Lower leg skin (tissue), 4 donors: ENCODE measurements at regions of chr14 and their contacts with region 1.

Region 1: DNA sequence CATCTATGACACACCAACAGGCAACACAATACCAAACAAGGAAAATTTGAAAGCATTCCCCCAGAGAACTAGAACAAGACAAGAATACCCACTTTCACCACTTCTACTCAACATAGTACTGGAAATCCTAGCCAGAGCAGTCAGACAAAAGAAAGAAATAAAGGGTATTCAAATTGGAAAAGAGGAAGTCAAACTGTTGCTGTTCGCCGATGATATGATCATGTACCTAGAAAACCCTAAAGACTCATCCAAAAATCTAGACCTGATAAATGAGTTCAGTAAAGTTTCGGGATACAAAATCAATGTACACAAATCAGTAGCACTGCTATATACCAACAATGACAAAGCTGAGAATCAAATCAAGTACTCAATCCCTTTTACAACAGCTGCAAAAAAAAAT is 8.1 kb upstream of the ATL1 start:
- DNase-seq: no peak
- H3K4me3 ChIP-seq: no peak overlapping the region
- CTCF ChIP-seq: no peak
- POLR2A ChIP-seq: no peak

Region 2: GRCh38 chr14:50610465-50610864 is 58.6 kb after region 1 on chr14:
- intact Hi-C with region 1: loop called (anchors 2 kb)
- DNase-seq: no peak
- H3K4me3 ChIP-seq: no peak overlapping the region
- CTCF ChIP-seq: no peak
- POLR2A ChIP-seq: no peak

Region 3: DNA sequence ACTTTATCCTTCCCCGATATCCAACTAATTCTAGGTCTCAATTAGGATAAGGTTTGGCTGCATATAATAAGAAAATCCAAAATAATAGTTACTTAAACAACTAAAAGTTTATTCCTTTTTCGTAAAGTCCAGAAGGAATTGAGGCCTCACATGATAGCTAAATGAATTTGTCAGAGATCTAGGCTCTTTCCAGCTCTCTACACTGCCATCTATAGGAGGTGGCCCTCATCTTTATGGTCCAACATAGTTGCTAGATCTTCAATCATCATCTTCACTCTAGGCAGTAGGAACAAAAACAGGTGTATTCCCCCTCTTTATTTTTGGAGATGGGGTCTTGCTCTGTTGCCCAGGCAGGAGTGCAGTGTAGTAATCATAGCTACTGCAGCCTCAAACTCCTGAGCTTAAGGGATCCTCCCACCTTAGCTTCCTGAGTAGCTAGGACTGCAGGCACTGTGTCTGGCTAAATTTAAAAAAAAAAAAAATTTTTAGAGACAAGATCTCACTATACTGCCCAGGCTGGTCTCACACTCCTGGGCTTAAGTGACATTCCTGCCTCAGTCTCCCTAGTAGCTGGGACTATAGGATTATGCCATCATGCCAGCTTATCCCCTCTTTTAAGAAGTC is 162.7 kb after region 1 on chr14:
- intact Hi-C with region 1: no loop called
- DNase-seq: no peak
- H3K4me3 ChIP-seq: no peak overlapping the region
- CTCF ChIP-seq: no peak
- POLR2A ChIP-seq: no peak